Activated T-helper 2 cell treated with anti-CD3 and anti-CD28 coated beads, Interferon-gamma antibody, Interleukin-2, Interleukin-4, amounts not matched to agents 10 μg/mL and 5 μg/mL and 100 μg/mL, durations not matched to agents 14 hours and 24 hours and 36 hours (primary cell): ENCODE measurements at regions of chr5 and their contacts with region 1.

Region 1: GRCh38 chr5:88140856-88141752 is 127.5 kb downstream of the TMEM161B start:
- DNase-seq: peak; percentile 94
- H3K4me3 Mint-ChIP-seq: no peak overlapping the region
- H3K27ac Mint-ChIP-seq: no peak overlapping the region
- H3K4me1 Mint-ChIP-seq: peaks cover 21% of the 10 kb centered on the region
- H3K27me3 Mint-ChIP-seq: peaks cover 37% of the 10 kb centered on the region

Region 2: GRCh38 chr5:88268385-88269184 is 127.5 kb after region 1 on chr5 and contains the start of gene TMEM161B:
- intact Hi-C with region 1: loop called (anchors 1 kb)
- DNase-seq: peak; percentile 90
- H3K4me3 Mint-ChIP-seq: peak within 1 kb of the TSS; percentile 99
- H3K27ac Mint-ChIP-seq: peak within 1 kb of the TSS; percentile 97
- H3K4me1 Mint-ChIP-seq: peaks cover 45% of the 10 kb centered on the region
- H3K27me3 Mint-ChIP-seq: no peaks in the 10 kb centered on the region
- total RNA-seq, gene TMEM161B: 31.1 and 32.7 TPM in 2 replicates

Region 3: GRCh38 chr5:88502179-88503040 is 361.3 kb after region 1 on chr5:
- intact Hi-C with region 1: loop called (anchors 5 kb)
- DNase-seq: no peak
- H3K4me3 Mint-ChIP-seq: peak overlapping the region; percentile 86
- H3K27ac Mint-ChIP-seq: peak overlapping the region; percentile 85
- H3K4me1 Mint-ChIP-seq: peaks cover 19% of the 10 kb centered on the region
- H3K27me3 Mint-ChIP-seq: peaks cover 13% of the 10 kb centered on the region

Region 4: DNA sequence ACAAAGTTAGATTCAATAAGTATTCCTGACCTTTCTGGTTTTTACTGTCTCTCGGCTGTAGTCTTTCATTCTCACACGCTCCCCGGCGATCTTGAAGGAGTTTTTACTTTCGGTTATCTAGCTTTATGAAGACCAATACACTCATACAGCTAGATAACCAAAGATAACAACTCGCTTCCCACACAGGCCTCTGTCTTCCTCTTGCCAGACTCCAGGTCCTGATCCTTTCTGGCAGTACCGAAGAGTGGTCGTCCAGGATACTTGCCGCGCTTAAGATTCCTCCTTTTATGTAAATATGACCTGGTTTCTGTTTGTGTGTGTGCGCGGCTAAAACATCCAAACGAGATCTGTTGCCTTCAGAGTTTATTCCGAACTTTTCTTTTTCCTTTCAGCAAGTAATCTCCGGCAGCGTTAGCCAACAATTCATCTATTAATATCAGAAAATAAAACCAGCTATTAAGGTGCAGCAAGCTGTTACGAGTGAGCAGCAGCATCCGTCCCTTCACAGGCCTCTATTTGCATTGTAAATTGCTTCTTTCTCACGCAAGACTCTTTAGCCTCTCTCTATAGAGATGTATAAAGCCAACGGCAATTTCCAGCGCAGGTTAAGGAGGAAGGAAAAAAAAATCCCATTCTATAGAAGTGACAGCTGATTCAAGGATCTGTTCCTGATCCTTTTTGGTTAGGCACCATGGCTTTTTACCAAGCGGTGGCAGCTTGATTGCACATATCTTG is 525.8 kb after region 1 on chr5:
- intact Hi-C with region 1: loop called (anchors 2 kb)
- DNase-seq: no peak
- H3K4me3 Mint-ChIP-seq: peak overlapping the region; percentile 78
- H3K27ac Mint-ChIP-seq: no peak overlapping the region
- H3K4me1 Mint-ChIP-seq: peaks cover 28% of the 10 kb centered on the region
- H3K27me3 Mint-ChIP-seq: peaks cover 80% of the 10 kb centered on the region